BJ (cell line): ENCODE measurements at regions of chr9 and their contacts with region 1.

Region 1: GRCh38 chr9:36407122-36407723 is 7.2 kb upstream of the RNF38 start:
- DNase-seq: no peak
- H3K4me3 ChIP-seq: no peak overlapping the region
- H3K27me3 ChIP-seq: no peaks in the 10 kb centered on the region
- CTCF ChIP-seq: peak; percentile 90

Region 2: DNA sequence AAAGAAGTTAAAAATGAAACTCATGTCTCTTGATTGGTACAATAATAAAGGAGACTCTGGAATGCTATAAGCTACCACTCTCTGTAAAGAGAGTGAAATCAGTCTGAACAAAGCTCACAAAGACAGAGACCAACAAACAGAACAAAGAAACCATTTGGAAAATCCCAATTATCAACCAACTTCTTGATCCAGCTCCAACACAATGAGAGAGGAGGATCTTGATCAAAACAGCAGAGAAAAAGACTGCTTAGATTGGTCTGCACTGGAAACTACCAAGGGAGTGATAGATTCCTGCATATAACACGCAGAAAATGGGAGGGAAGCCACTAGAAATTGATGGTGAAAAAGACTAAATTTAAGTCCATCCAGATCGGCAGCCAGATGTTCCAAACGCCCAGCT is 16.0 kb after region 1 on chr9:
- CTCF ChIA-PET with region 1: interaction called, 32 read pairs
- POLR2A ChIA-PET with region 1: no interaction called
- DNase-seq: no peak
- H3K4me3 ChIP-seq: no peak overlapping the region
- H3K27me3 ChIP-seq: no peaks in the 10 kb centered on the region
- CTCF ChIP-seq: no peak

Region 3: DNA sequence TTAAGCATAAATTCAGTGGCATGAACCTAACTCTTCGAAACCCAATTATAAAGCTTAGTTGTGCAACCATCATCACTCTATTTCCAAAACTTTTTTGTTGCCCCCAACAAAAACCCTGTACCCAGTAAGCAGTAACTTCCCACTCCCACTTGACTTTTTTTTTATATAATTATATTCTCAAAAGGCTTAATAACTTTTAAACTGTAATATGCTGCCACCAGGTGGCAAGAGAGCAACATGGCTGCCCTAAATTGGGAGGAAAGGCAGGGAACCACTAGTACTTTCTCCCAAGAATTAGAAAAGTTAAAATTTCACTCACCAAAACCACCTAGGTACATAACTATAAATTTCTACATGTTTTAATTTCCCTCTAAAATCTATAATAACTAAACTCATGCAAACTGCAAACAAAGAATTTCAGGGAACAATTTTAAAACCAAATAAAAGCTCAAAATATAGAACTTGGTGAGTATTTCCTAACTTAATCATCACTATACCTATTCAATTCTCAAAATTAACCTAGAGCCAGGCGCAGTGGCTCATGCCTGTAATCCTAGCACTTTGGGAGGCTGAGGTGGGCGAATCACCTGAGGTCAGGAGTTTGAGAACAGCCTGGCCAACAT is 43.0 kb after region 1 on chr9:
- CTCF ChIA-PET with region 1: interaction called, 39 read pairs
- POLR2A ChIA-PET with region 1: no interaction called
- DNase-seq: no peak
- H3K4me3 ChIP-seq: no peak overlapping the region
- H3K27me3 ChIP-seq: no peaks in the 10 kb centered on the region
- CTCF ChIP-seq: peak; percentile 80

Region 4: GRCh38 chr9:36560857-36561221 is 153.6 kb after region 1 on chr9:
- CTCF ChIA-PET with region 1: interaction called, 93 read pairs
- POLR2A ChIA-PET with region 1: no interaction called
- DNase-seq: no peak
- H3K4me3 ChIP-seq: no peak overlapping the region
- H3K27me3 ChIP-seq: no peaks in the 10 kb centered on the region
- CTCF ChIP-seq: no peak

Region 5: GRCh38 chr9:36728651-36729520 is 321.7 kb after region 1 on chr9:
- CTCF ChIA-PET with region 1: interaction called, 17 read pairs
- POLR2A ChIA-PET with region 1: no interaction called
- DNase-seq: peak; percentile 2
- H3K4me3 ChIP-seq: no peak overlapping the region
- H3K27me3 ChIP-seq: peaks cover 3% of the 10 kb centered on the region
- CTCF ChIP-seq: peak; percentile 74

Region 6: GRCh38 chr9:36961561-36962298 is 554.5 kb after region 1 on chr9:
- CTCF ChIA-PET with region 1: no interaction called
- POLR2A ChIA-PET with region 1: no interaction called
- DNase-seq: no peak
- H3K4me3 ChIP-seq: no peak overlapping the region
- H3K27me3 ChIP-seq: peaks cover 21% of the 10 kb centered on the region
- CTCF ChIP-seq: no peak